BJ (cell line): ENCODE measurements at regions of chr3 and their contacts with region 1.

Region 1: DNA sequence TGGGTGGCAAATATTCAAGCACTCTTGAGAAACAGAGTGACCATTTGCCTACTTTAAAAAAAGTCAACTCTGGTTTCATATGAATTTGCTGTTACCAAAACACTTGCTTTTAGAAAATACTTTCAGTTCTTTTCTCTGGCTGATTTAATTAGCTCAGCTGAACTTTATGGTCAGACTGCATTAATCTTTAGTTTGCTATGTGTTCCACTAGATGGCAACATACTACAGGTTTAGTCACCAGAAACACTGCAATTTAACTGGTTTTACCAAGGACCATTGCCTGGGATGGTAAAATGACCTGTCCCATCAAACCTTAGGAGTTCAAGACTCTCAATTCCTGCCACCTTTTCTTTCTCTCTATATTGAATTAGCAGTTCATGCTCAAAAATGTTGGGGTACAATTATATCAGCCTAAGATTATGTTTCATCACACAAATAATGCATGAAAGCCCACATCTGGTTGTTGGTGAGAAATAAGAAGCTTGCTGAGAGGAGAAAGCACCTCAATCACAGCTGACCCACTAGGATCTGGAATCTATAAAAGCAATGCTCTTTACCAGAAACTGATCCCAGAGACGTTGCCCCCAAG is 14.2 kb downstream of the EIF4E3 start:
- DNase-seq: no peak
- H3K4me3 ChIP-seq: no peak overlapping the region
- H3K27me3 ChIP-seq: peaks cover 6% of the 10 kb centered on the region
- CTCF ChIP-seq: peak; percentile 64

Region 2: GRCh38 chr3:71444028-71444860 is 266.8 kb before region 1 on chr3:
- CTCF ChIA-PET with region 1: no interaction called
- POLR2A ChIA-PET with region 1: no interaction called
- DNase-seq: no peak
- H3K4me3 ChIP-seq: no peak overlapping the region
- H3K27me3 ChIP-seq: no peaks in the 10 kb centered on the region
- CTCF ChIP-seq: no peak

Region 3: GRCh38 chr3:71725279-71725991 is 14.4 kb after region 1 on chr3 and contains the start of gene EIF4E3:
- CTCF ChIA-PET with region 1: interaction called, 11 read pairs
- POLR2A ChIA-PET with region 1: no interaction called
- DNase-seq: no peak
- H3K4me3 ChIP-seq: peak within 1 kb of the TSS; percentile 57
- H3K27me3 ChIP-seq: peaks cover 12% of the 10 kb centered on the region
- CTCF ChIP-seq: no peak
- polyA plus RNA-seq, gene EIF4E3: 1.1 and 2.8 TPM in 2 replicates